ENCODE measurements at regions of chr16 and their contacts with region 1.

Region 1: DNA sequence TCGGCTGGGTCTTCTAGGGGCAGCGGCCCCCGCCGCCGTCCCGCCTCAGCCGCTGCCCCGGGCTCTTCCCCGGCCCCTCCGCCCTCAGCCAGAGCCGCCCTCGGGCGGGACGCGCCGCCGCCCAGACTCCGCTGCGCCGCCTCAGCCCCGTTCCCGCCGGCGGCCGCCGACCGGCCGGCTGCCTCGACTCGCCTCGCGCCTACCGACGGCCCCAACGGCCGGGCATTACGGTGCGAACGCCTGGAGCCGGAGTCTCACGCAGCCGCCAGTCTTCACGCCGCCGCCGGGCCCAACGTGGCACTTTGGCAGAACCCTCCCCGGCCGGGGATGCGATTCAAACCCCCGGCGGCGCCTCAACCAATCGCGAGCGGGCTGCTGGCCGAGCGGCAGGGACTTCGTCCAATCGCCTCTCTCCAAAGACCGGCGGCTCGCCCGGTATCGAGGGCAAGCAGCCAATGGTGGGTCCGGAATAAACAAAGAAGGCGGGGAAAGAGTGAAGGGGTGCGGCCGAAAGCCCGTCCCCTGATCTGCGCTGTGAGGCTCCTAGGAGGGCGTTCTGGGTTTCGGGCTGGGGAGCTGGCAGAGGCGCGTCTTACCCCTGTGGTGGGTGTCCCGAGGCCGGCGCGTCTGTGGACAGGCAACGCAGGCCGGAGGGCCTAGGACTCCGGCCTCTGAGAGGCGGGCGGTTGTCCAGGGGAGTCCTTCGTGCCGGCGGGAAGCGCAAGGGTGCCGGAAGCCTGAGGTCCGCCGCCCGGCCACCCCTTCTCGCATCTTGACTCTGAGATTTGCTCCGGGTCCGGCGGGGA is at the start of gene CDR2:
- DNase-seq: peak; percentile 94 to 100 (median 98)

Region 2: DNA sequence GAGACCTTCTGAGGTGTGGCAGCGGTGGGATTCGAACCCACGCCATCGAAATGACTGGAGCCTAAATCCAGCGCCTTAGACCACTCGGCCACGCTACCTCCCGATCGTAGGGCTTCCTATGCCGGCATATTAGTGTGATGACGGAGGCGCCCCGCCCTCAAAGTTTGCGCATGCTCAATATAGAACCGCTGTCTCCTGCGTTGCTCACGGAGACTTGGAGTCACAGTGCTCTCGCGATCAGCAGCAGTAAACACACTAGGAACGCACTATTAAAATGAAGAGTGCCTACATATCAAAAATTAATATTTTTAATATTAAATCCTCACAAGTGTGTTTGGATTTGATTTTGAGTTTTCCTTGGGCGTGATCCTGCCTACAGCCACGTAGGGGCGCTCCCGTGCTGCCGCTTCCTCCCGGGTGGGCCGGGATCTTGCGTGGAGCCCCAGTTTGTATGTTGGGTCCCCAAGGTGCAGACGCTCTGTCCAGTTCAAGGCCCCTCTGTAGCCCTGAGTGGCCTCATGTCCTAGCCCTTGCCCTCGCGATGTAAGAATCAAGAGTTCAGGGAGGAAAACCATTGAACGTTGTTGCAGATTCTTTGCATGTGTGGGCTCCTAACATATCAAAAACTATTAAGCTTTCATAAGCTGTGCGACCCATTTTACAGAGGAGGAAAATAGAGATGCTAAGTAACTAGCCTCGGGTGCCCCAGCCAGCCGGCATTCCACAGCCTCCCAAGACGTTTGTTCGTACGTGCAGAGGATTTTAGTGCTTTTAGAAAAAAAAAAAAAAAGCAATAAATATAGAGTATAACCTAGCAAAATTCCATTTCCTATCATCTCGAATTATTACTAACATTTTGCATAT is 178.6 kb before region 1 on chr16:
- intact Hi-C with region 1: loop called (anchors 5 kb)
- DNase-seq: peak; percentile 75 to 98 (median 93)

Region 3: GRCh38 chr16:22424161-22424937 is 49.8 kb after region 1 on chr16:
- intact Hi-C with region 1: loop called (anchors 10 kb)
- DNase-seq: peak in 30 of 42 donors; percentile 16 to 82 (median 42)